ENCODE measurements at regions of chr19 and their contacts with region 1.

Region 1: DNA sequence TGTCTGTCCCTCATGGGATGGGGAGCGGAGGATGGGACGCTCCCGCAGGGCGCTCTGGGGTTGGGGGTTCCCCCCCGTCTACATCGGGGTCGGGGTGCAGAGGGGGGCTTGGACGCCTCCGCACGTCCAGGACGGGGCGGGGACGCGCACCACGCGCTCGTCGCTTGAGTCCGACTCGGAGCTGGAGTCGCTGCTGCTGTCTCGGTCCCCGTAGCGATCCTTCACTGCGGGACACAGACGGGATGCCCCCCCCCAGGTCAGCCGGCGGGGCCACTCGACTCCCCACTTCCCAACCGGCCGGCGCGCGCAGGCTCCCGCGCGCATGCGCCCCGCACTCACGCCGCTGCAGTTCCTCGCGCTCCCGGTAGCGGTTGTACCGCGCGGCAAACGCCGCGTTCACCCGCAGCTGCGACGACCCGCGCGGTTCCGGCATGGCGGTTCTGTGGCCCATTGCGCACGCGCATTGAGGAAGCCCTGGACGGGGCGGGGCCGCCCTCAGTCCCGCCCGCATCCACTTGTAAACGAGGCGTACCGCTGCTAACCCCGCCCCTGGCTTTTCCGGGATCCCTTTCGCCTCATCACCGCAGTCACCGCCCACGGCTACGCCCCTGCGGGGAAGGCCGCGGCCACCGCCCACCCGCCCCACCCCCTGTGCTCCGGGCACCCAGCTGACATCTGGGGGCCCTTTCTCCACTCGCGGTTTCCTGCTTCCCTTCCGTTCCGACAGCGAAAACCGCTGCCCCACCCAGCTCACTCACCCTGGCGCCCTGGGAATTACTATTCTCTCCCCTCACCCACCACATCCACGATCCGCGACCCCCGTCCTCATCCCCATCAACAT is at the start of gene KRI1:
- DNase-seq: peak; percentile 99
- H3K4me3 ChIP-seq: peak within 1 kb of the TSS; percentile 92 to 100 (median 98)
- H3K4me3 Mint-ChIP-seq: peak within 1 kb of the TSS; percentile 92 to 99
- H3K27ac ChIP-seq: peak within 1 kb of the TSS; percentile 84 to 90
- H3K27ac Mint-ChIP-seq: peak within 1 kb of the TSS; percentile 93 to 100 (median 98)
- H3K4me1 ChIP-seq: peaks cover 38 to 44% of the 10 kb centered on the region in 2 donors
- H3K4me1 Mint-ChIP-seq: peaks cover 35% of the 10 kb centered on the region
- H3K27me3 ChIP-seq: no peaks in the 10 kb centered on the region
- H3K27me3 Mint-ChIP-seq: peaks cover 0 to 1% (median 0%) of the 10 kb centered on the region in 3 donors
- CTCF ChIP-seq: peak; percentile 54
- polyA plus RNA-seq, gene KRI1: 3.9 to 21.0 (median 6.1) TPM

Region 2: DNA sequence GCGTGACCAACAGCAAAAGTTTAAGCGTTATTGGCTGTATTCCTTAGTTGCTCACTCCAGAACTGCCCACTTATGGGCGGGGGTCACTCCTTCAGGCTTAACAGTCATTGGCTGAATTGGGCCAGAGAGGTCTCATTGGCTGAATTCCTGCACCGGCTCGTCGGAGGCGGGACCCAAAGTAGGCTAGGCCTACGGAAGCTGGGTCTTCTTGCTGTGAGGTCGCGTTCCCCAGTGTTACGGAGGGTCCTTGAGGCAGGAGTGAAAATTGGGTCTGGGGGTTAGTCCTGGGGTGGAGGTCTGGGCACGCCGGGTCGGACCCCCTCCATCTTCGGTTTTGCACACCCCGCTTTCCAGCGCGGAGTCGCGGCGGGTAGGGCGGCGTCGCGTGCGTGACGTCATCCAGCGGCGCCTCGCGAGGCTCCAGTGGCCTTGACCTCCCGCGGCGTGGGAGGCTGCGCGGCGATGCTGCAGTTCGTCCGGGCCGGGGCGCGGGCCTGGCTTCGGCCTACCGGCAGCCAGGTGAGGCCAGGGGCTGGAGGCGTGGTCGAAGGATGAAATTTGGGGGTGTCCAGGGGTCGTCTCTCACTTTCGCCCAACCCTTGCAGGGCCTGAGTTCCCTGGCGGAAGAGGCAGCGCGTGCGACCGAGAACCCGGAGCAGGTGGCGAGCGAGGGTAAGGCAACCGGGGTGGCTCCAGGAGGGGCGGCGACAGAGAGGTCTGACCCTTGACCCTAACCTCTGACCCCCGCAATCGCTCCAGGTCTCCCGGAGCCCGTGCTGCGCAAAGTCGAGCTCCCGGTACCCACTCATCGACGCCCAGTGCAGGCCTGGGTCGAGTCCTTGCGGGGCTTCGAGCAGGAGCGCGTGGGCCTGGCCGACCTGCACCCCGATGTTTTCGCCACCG is 313.7 kb before region 1 on chr19 and contains the start of gene MRPL4:
- intact Hi-C with region 1: loop called in 1 of 2 experiments (anchors 5 kb)
- DNase-seq: peak; percentile 97 to 99 (median 98)
- H3K4me3 ChIP-seq: peak within 1 kb of the TSS; percentile 56 to 98 (median 86)
- H3K4me3 Mint-ChIP-seq: peak within 1 kb of the TSS; percentile 96 to 97
- H3K27ac ChIP-seq: peak within 1 kb of the TSS; percentile 47 to 88
- H3K27ac Mint-ChIP-seq: peak within 1 kb of the TSS; percentile 88 to 99 (median 94)
- H3K4me1 ChIP-seq: peaks cover 16 to 28% of the 10 kb centered on the region in 2 donors
- H3K4me1 Mint-ChIP-seq: peaks cover 12% of the 10 kb centered on the region
- H3K27me3 ChIP-seq: no peaks in the 10 kb centered on the region
- H3K27me3 Mint-ChIP-seq: peaks cover 0 to 3% (median 1%) of the 10 kb centered on the region in 3 donors
- CTCF ChIP-seq: no peak
- polyA plus RNA-seq, gene MRPL4: 20.4 to 40.2 (median 22.7) TPM

Region 3: GRCh38 chr19:10461047-10461790 is 104.6 kb before region 1 on chr19:
- intact Hi-C with region 1: loop called (anchors 1 to 5 kb)
- DNase-seq: peak; percentile 90 to 96 (median 93)
- H3K4me3 ChIP-seq: peak overlapping the region; percentile 4 to 76 (median 37)
- H3K4me3 Mint-ChIP-seq: peak overlapping the region; percentile 69 to 79
- H3K27ac ChIP-seq: no peak overlapping the region
- H3K27ac Mint-ChIP-seq: peak overlapping the region in 5 of 7 donors; percentile 37 to 83 (median 82)
- H3K4me1 ChIP-seq: peaks cover 10 to 16% of the 10 kb centered on the region in 2 donors
- H3K4me1 Mint-ChIP-seq: peaks cover 10% of the 10 kb centered on the region
- H3K27me3 ChIP-seq: no peaks in the 10 kb centered on the region
- H3K27me3 Mint-ChIP-seq: peaks cover 2 to 13% (median 12%) of the 10 kb centered on the region in 3 donors
- CTCF ChIP-seq: no peak

Region 4: DNA sequence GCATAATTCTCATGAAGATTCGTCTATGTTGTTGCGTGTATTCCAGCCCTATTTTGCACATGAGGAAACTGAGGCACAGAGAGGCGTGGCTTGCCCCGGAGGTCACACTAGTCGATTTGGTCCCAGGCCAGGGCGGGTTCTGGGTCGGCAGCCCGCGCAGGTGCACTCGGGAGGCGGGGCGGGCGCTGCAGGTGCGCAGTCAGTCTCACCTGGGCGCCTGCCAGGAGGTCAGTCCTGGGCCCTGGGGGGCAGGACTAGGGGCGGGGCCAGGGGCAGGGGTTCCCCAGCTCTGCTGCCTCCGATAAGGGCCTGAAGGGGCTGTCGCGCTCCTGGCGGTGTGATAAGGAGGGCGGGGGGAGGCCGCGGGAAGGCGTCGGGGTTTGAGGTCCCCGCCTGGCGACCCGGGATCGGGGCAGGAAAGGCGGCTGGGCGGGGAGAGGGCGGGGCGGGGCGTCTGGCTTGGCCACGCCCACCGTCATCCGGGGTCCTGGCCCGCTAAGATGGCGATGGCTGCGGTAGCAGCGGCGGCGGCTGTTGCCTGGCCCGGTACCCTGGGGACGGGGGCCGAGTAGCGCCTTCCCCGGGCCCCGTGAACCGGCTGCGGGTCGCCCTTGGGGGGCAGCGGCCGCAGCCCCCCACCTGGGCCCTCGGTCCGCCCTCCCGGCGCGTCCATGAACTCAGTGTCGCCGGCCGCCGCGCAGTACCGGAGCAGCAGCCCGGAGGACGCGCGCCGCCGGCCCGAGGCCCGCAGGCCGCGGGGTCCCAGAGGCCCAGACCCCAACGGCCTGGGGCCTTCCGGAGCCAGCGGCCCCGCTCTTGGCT is 22.2 kb before region 1 on chr19 and contains the start of gene ATG4D:
- intact Hi-C with region 1: loop called in 1 of 2 experiments (anchors 2 kb)
- DNase-seq: peak; percentile 55 to 74 (median 66)
- H3K4me3 ChIP-seq: peak within 1 kb of the TSS; percentile 76 to 95 (median 80)
- H3K4me3 Mint-ChIP-seq: peak within 1 kb of the TSS; percentile 84 to 90
- H3K27ac ChIP-seq: peak within 1 kb of the TSS; percentile 28 to 83
- H3K27ac Mint-ChIP-seq: peak within 1 kb of the TSS in 6 of 7 donors; percentile 35 to 89 (median 76)
- H3K4me1 ChIP-seq: peaks cover 24 to 33% of the 10 kb centered on the region in 2 donors
- H3K4me1 Mint-ChIP-seq: peaks cover 27% of the 10 kb centered on the region
- H3K27me3 ChIP-seq: no peaks in the 10 kb centered on the region
- H3K27me3 Mint-ChIP-seq: peaks cover 2 to 6% (median 5%) of the 10 kb centered on the region in 3 donors
- CTCF ChIP-seq: no peak
- polyA plus RNA-seq, gene ATG4D: 10.7 to 52.8 (median 11.9) TPM

Region 5: GRCh38 chr19:10593820-10594637 is 28.2 kb after region 1 on chr19:
- intact Hi-C with region 1: no loop called
- DNase-seq: peak; percentile 31 to 56 (median 44)
- H3K4me3 ChIP-seq: no peak overlapping the region
- H3K4me3 Mint-ChIP-seq: peak overlapping the region; percentile 12 to 37
- H3K27ac ChIP-seq: peak overlapping the region; percentile 64 to 75
- H3K27ac Mint-ChIP-seq: peak overlapping the region; percentile 66 to 94 (median 84)
- H3K4me1 ChIP-seq: peaks cover 64 to 72% of the 10 kb centered on the region in 2 donors
- H3K4me1 Mint-ChIP-seq: peaks cover 65% of the 10 kb centered on the region
- H3K27me3 ChIP-seq: no peaks in the 10 kb centered on the region
- H3K27me3 Mint-ChIP-seq: peaks cover 0 to 3% (median 1%) of the 10 kb centered on the region in 3 donors
- CTCF ChIP-seq: no peak

Region 6: GRCh38 chr19:10695401-10696398 is 129.9 kb after region 1 on chr19:
- intact Hi-C with region 1: loop called in 1 of 2 experiments (anchors 5 kb)
- DNase-seq: peak; percentile 90 to 96 (median 91)
- H3K4me3 ChIP-seq: peak overlapping the region in 1 of 3 experiments; percentile 67
- H3K4me3 Mint-ChIP-seq: peak overlapping the region; percentile 75 to 89
- H3K27ac ChIP-seq: no peak overlapping the region
- H3K27ac Mint-ChIP-seq: peak overlapping the region in 2 of 7 donors; percentile 76 to 81
- H3K4me1 ChIP-seq: peaks cover 10 to 16% of the 10 kb centered on the region in 2 donors
- H3K4me1 Mint-ChIP-seq: peaks cover 16% of the 10 kb centered on the region
- H3K27me3 ChIP-seq: no peaks in the 10 kb centered on the region
- H3K27me3 Mint-ChIP-seq: peaks cover 6 to 9% (median 7%) of the 10 kb centered on the region in 3 donors
- CTCF ChIP-seq: no peak